ENCODE measurements at regions of chr6 and their contacts with region 1.

Region 1: GRCh38 chr6:8000188-8000596 is 64.0 kb downstream of the BLOC1S5 start:
- DNase-seq: no peak
- H3K4me3 ChIP-seq: no peak overlapping the region
- H3K27ac ChIP-seq: no peak overlapping the region
- H3K4me1 ChIP-seq: no peaks in the 10 kb centered on the region
- H3K27me3 ChIP-seq: no peaks in the 10 kb centered on the region
- CTCF ChIP-seq: no peak
- POLR2A ChIP-seq: no peak

Region 2: DNA sequence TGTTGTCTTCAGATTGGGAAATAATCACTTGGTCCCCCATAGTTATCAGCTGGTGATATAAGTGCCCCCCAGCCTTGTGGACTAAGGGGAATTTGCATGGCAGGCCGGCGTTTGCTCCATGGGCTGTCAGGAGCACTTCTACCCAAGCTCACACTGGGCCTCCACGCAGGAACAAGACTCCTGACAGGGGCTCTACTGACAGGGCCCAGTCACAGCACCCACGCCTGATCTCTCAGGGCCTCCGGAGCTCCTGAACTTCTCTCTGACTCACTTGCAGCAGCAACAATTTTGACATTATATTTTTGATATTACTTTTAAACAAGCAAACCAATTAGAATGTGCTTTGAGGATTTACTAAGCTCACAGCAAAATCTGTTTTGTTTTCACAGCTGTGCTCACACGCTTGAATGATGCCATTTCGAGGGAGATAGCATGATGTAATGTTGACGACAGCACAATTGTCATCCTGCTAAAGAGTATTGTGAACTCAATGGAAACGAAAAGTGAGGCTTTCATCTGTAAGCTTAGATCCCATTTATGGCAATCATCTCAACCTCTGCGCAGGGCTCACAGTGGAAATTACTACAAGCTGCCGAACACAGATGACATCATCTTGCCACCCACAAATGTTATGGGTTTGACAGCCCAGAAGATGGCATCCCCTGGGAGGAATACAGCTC is 60.9 kb before region 1 on chr6:
- intact Hi-C with region 1: loop called (anchors 2 kb)
- DNase-seq: no peak
- H3K4me3 ChIP-seq: no peak overlapping the region
- H3K27ac ChIP-seq: peak overlapping the region in 1 of 2 donors; percentile 15
- H3K4me1 ChIP-seq: no peaks in the 10 kb centered on the region
- H3K27me3 ChIP-seq: no peaks in the 10 kb centered on the region
- CTCF ChIP-seq: no peak
- POLR2A ChIP-seq: no peak

Region 3: DNA sequence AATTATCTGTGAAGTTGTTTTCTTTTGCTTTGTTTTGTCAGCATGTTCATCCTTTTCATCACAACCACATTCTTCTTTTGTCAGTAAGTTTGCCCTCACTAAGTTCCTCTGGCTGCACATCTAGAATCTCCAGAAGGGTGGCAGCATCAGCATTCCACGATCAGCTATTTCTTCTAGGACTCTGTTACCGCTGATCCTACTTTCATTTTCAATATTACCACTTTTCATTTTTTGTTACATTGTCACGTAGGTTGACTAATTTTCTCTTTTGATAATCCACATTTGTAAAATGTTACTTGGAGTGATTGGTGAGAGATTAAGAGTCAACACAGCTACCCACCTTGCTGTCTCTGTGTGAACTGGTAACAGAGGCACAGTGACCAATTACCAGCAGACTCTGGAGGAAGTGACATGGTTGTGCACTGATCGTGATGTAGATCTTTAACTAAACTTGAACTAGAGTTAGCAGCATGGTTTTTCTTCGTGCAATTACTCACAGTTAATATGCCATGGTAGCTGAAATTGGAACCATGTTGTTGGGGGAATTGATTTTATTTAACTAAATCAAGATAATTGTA is 743.1 kb after region 1 on chr6:
- intact Hi-C with region 1: no loop called
- DNase-seq: no peak
- H3K4me3 ChIP-seq: peak overlapping the region in 1 of 3 donors; percentile 54
- H3K27ac ChIP-seq: no peak overlapping the region
- H3K4me1 ChIP-seq: no peaks in the 10 kb centered on the region
- H3K27me3 ChIP-seq: no peaks in the 10 kb centered on the region
- CTCF ChIP-seq: no peak
- POLR2A ChIP-seq: no peak